ENCODE measurements at regions of chr21 and their contacts with region 1.

Region 1: DNA sequence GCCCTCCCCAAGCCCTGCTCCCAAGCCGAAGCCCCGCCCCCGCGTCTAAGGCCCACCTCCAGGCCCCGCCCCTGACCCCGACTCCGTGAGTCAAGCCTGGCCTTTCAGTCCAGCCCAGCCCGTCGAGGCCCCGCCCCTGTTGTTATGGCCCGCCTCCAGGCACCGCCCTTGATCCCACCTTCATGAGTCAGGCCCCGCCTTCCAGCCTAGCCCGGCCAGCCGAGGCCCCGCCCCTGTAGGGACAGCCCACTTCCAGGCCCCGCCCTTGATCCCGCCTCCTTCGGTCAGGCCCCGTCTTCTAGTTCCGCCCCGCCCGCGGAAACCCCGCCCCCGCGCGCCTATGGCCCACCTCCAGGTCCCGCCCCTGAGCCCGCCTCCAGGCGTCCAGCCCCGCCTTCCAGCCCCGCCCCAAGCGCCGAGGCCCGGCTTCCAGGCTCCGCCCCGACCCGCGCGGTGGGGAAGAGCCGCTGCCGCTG is 247 bp upstream of the DOP1B start:
- DNase-seq: peak; percentile 99 to 100
- ATAC-seq: peak; percentile 89 to 97 (median 90)
- H3K4me3 ChIP-seq: peak overlapping the region; percentile 58
- H3K4me3 Mint-ChIP-seq: peak overlapping the region; percentile 81
- H3K27ac ChIP-seq: no peak overlapping the region
- H3K27ac Mint-ChIP-seq: peak overlapping the region in 1 of 2 donors; percentile 84
- H3K4me1 ChIP-seq: peaks cover 15% of the 10 kb centered on the region
- H3K4me1 Mint-ChIP-seq: peaks cover 24 to 29% of the 10 kb centered on the region in 2 donors
- H3K27me3 ChIP-seq: no peaks in the 10 kb centered on the region
- H3K27me3 Mint-ChIP-seq: no peaks in the 10 kb centered on the region
- CTCF ChIP-seq: no peak

Region 2: DNA sequence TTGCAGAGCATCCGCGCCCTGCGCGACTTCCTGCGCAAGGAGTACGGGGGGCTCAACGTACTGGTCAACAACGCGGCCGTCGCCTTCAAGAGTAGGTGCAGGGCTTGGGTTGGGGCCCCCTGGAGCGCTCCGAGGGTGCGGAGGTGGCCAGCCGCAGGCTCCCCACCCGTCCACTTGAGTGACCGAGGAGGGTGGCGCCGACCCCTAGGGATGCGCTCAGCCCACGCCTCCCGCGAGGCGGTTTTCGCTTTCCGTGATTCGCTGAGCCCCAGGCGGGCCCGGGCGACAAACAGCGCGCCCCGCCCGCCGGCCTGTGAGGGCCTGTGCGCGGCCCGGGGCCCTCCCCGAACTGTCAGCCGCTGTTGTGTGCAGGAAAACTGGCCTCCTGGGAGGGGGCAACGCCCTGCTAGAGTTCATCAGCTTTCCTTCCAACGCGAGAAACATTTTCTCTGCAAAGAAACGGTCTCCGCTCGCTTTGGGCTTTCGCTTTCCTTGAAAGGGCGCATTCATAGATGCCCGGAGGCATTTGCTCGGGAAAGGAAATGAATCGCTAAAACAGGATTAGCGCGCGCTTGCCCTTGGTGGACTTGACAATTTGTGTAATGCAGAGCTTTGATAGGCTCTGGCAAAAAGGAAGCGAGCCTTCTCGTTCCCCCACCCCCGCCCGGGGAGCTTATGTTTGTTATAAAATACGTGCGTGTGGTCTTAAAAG is 20.8 kb before region 1 on chr21:
- intact Hi-C with region 1: loop called (anchors 1 kb)
- DNase-seq: peak; percentile 45 to 65
- ATAC-seq: peak; percentile 81 to 88 (median 84)
- H3K4me3 ChIP-seq: peak overlapping the region; percentile 63
- H3K4me3 Mint-ChIP-seq: peak overlapping the region; percentile 94
- H3K27ac ChIP-seq: peak overlapping the region; percentile 0
- H3K27ac Mint-ChIP-seq: peak overlapping the region; percentile 70 to 89
- H3K4me1 ChIP-seq: peaks cover 20% of the 10 kb centered on the region
- H3K4me1 Mint-ChIP-seq: peaks cover 10 to 23% of the 10 kb centered on the region in 2 donors
- H3K27me3 ChIP-seq: no peaks in the 10 kb centered on the region
- H3K27me3 Mint-ChIP-seq: no peaks in the 10 kb centered on the region
- CTCF ChIP-seq: no peak

Region 3: GRCh38 chr21:36174780-36175179 is 18.4 kb after region 1 on chr21:
- intact Hi-C with region 1: loop called (anchors 1 kb)
- DNase-seq: no peak
- ATAC-seq: no peak
- H3K4me3 ChIP-seq: no peak overlapping the region
- H3K4me3 Mint-ChIP-seq: peak overlapping the region; percentile 45
- H3K27ac ChIP-seq: peak overlapping the region; percentile 79
- H3K27ac Mint-ChIP-seq: peak overlapping the region; percentile 81 to 91
- H3K4me1 ChIP-seq: peaks cover 25% of the 10 kb centered on the region
- H3K4me1 Mint-ChIP-seq: peaks cover 21 to 31% of the 10 kb centered on the region in 2 donors
- H3K27me3 ChIP-seq: no peaks in the 10 kb centered on the region
- H3K27me3 Mint-ChIP-seq: no peaks in the 10 kb centered on the region
- CTCF ChIP-seq: no peak

Region 4: DNA sequence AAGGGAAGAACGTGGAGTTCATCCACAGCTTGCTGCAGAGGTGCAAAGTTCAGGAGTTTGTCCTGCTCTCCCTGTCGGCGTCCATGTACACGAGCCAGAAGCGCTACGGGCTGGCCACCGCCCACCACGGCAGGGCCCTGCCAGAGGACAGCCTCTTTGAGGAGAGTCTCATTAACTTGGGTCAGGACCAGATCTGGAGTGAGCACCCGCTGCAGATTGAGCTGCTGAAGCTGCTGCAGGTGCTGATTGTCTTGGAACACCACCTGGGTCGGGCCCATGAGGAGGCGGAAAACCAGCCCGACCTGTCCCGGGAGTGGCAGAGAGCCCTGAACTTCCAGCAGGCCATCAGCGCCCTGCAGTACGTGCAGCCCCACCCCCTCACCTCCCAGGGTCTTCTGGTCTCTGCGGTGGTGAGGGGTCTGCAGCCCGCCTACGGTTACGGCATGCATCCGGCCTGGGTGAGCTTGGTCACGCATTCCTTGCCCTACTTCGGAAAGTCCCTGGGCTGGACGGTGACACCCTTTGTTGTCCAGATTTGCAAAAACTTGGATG is 89.8 kb after region 1 on chr21:
- intact Hi-C with region 1: no loop called
- DNase-seq: no peak
- ATAC-seq: no peak
- H3K4me3 ChIP-seq: no peak overlapping the region
- H3K4me3 Mint-ChIP-seq: no peak overlapping the region
- H3K27ac ChIP-seq: no peak overlapping the region
- H3K27ac Mint-ChIP-seq: no peak overlapping the region
- H3K4me1 ChIP-seq: no peaks in the 10 kb centered on the region
- H3K4me1 Mint-ChIP-seq: peaks cover 0 to 4% of the 10 kb centered on the region in 2 donors
- H3K27me3 ChIP-seq: no peaks in the 10 kb centered on the region
- H3K27me3 Mint-ChIP-seq: no peaks in the 10 kb centered on the region
- CTCF ChIP-seq: no peak